ENCODE measurements at regions of chr3 and their contacts with region 1.

Region 1: DNA sequence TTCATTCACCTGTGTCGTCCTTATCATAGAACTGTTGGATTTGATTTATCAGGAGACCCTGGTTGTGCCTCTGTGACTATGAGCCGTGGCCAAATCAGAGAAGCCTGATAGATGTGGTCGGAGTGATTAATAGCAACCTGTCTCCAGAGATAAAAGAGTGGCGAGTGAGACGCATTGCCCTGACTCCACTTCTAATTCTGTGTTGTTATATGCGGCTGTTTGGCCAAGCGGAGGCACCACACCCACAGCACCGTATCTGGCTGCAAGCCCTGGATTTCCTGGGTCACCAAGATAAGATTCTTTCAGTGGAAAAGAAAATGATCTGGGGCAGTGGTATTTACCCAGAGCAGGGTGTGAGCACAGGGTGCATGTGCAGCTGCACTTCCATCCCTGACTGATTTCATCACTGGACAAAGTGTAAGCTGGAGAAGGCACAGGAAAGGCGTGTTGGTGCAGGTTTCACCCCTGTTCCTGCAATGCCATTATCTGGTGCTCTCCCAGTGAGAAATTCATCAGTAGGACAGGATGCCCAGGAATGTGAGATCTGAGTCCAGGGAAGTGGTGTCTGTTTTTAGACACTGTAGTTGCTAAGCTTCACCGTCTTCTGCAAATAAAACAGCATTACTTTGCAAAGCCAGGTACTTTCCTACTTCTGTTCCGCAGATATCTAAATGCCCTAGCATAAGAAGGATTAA is 84.6 kb downstream of the CD47 start:
- DNase-seq: no peak
- ATAC-seq: peak; percentile 91

Region 2: GRCh38 chr3:107956991-107957900 is 49.0 kb before region 1 on chr3:
- intact Hi-C with region 1: no loop called
- DNase-seq: peak; percentile 82
- ATAC-seq: peak; percentile 94

Region 3: GRCh38 chr3:107981471-107982111 is 24.6 kb before region 1 on chr3:
- intact Hi-C with region 1: loop called (anchors 2 kb)
- DNase-seq: no peak
- ATAC-seq: peak; percentile 90